Caco-2 (cell line): ENCODE measurements at regions of chr9 and their contacts with region 1.

Region 1: GRCh38 chr9:96875461-96876364 is 21.4 kb upstream of the ZNF782 start:
- DNase-seq: peak; percentile 93 to 96
- H3K4me3 ChIP-seq: peak overlapping the region; percentile 52
- H3K4me3 Mint-ChIP-seq: peak overlapping the region; percentile 99
- H3K27ac Mint-ChIP-seq: peak overlapping the region; percentile 90
- H3K4me1 ChIP-seq: 0 out of 2 replicates have a peak, but pooled peaks cover 4% of the 10 kb centered on the region
- H3K4me1 Mint-ChIP-seq: peaks cover 7% of the 10 kb centered on the region
- H3K27me3 ChIP-seq: no peaks in the 10 kb centered on the region
- H3K27me3 Mint-ChIP-seq: no peaks in the 10 kb centered on the region
- CTCF ChIP-seq: peak; percentile 62 to 72

Region 2: GRCh38 chr9:97109194-97109811 is 233.6 kb after region 1 on chr9:
- CTCF ChIA-PET with region 1: interaction called, 5 read pairs
- POLR2A ChIA-PET with region 1: no interaction called
- intact Hi-C with region 1: loop called (anchors 1 kb)
- DNase-seq: peak; percentile 78 to 81
- H3K4me3 ChIP-seq: no peak overlapping the region
- H3K4me3 Mint-ChIP-seq: no peak overlapping the region
- H3K27ac Mint-ChIP-seq: no peak overlapping the region
- H3K4me1 ChIP-seq: no peaks in the 10 kb centered on the region
- H3K4me1 Mint-ChIP-seq: no peaks in the 10 kb centered on the region
- H3K27me3 ChIP-seq: no peaks in the 10 kb centered on the region
- H3K27me3 Mint-ChIP-seq: no peaks in the 10 kb centered on the region
- CTCF ChIP-seq: peak; percentile 69 to 86